ENCODE measurements at regions of chr7 and their contacts with region 1.

Region 1: GRCh38 chr7:130831817-130832481 is 97.9 kb upstream of the KLF14 start:
- DNase-seq: no peak
- ATAC-seq: no peak
- H3K4me3 Mint-ChIP-seq: no peak overlapping the region
- H3K27ac Mint-ChIP-seq: no peak overlapping the region
- H3K4me1 Mint-ChIP-seq: no peaks in the 10 kb centered on the region
- H3K27me3 Mint-ChIP-seq: peaks cover 8% of the 10 kb centered on the region
- CTCF ChIP-seq: peak; percentile 79

Region 2: DNA sequence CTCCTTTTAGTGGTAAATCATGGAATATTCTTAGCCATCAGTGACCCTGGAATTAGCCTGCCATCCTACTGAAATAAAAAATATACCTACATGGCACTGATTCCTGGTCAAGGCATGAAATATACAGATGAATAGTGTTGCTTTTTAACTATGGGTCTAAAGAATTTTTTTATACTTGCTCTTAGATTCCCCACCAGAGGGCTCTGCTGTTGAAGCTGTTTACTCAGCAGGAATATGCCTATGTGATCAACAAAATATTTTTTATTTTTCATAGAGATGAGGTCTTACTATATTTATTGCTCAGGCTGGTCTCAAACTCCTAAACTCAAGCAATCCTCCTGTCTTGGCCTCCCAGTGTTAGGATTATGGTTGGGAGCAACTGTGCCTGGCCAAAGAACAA is 794.2 kb before region 1 on chr7:
- CTCF ChIA-PET with region 1: interaction called, 6 read pairs
- POLR2A ChIA-PET with region 1: no interaction called
- intact Hi-C with region 1: loop called (anchors 1 kb)
- DNase-seq: no peak
- ATAC-seq: no peak
- H3K4me3 Mint-ChIP-seq: no peak overlapping the region
- H3K27ac Mint-ChIP-seq: no peak overlapping the region
- H3K4me1 Mint-ChIP-seq: no peaks in the 10 kb centered on the region
- H3K27me3 Mint-ChIP-seq: no peaks in the 10 kb centered on the region
- CTCF ChIP-seq: no peak

Region 3: GRCh38 chr7:130063036-130063435 is 768.9 kb before region 1 on chr7:
- CTCF ChIA-PET with region 1: interaction called, 3 read pairs
- POLR2A ChIA-PET with region 1: no interaction called
- intact Hi-C with region 1: loop called (anchors 1 kb)
- DNase-seq: peak; percentile 48
- ATAC-seq: peak; percentile 67
- H3K4me3 Mint-ChIP-seq: no peak overlapping the region
- H3K27ac Mint-ChIP-seq: no peak overlapping the region
- H3K4me1 Mint-ChIP-seq: no peaks in the 10 kb centered on the region
- H3K27me3 Mint-ChIP-seq: peaks cover 7% of the 10 kb centered on the region
- CTCF ChIP-seq: peak; percentile 47

Region 4: GRCh38 chr7:130242198-130243014 is 589.5 kb before region 1 on chr7:
- CTCF ChIA-PET with region 1: no interaction called
- POLR2A ChIA-PET with region 1: no interaction called
- intact Hi-C with region 1: loop called (anchors 1 kb)
- DNase-seq: no peak
- ATAC-seq: no peak
- H3K4me3 Mint-ChIP-seq: no peak overlapping the region
- H3K27ac Mint-ChIP-seq: no peak overlapping the region
- H3K4me1 Mint-ChIP-seq: peaks cover 9% of the 10 kb centered on the region
- H3K27me3 Mint-ChIP-seq: peaks cover 5% of the 10 kb centered on the region
- CTCF ChIP-seq: no peak

Region 5: GRCh38 chr7:130668257-130669084 is 163.5 kb before region 1 on chr7 and contains the start of gene COPG2:
- CTCF ChIA-PET with region 1: no interaction called
- POLR2A ChIA-PET with region 1: no interaction called
- intact Hi-C with region 1: no loop called
- DNase-seq: peak; percentile 87
- ATAC-seq: peak; percentile 93
- H3K4me3 Mint-ChIP-seq: peak within 1 kb of the TSS; percentile 89
- H3K27ac Mint-ChIP-seq: peak within 1 kb of the TSS; percentile 75
- H3K4me1 Mint-ChIP-seq: peaks cover 11% of the 10 kb centered on the region
- H3K27me3 Mint-ChIP-seq: peaks cover 3% of the 10 kb centered on the region
- CTCF ChIP-seq: no peak
- total RNA-seq, gene COPG2: 15.3 and 15.4 TPM in 2 replicates

Measured in activated B cell treated with CpG ODN at 0.5 μM for 24 hours (primary cell).